CD8-positive, alpha-beta T cell (primary cell): ENCODE measurements at regions of chrX and their contacts with region 1.

Region 1: GRCh38 chrX:148043456-148043855 is 62.3 kb downstream of the FMR1NB start:
- DNase-seq: no peak
- ATAC-seq: no peak
- H3K4me3 ChIP-seq: no peak overlapping the region
- H3K4me3 Mint-ChIP-seq: no peak overlapping the region
- H3K27ac ChIP-seq: no peak overlapping the region
- H3K27ac Mint-ChIP-seq: no peak overlapping the region
- H3K4me1 ChIP-seq: no peaks in the 10 kb centered on the region
- H3K4me1 Mint-ChIP-seq: no peaks in the 10 kb centered on the region
- H3K27me3 ChIP-seq: no peaks in the 10 kb centered on the region
- H3K27me3 Mint-ChIP-seq: no peaks in the 10 kb centered on the region
- CTCF ChIP-seq: no peak

Region 2: DNA sequence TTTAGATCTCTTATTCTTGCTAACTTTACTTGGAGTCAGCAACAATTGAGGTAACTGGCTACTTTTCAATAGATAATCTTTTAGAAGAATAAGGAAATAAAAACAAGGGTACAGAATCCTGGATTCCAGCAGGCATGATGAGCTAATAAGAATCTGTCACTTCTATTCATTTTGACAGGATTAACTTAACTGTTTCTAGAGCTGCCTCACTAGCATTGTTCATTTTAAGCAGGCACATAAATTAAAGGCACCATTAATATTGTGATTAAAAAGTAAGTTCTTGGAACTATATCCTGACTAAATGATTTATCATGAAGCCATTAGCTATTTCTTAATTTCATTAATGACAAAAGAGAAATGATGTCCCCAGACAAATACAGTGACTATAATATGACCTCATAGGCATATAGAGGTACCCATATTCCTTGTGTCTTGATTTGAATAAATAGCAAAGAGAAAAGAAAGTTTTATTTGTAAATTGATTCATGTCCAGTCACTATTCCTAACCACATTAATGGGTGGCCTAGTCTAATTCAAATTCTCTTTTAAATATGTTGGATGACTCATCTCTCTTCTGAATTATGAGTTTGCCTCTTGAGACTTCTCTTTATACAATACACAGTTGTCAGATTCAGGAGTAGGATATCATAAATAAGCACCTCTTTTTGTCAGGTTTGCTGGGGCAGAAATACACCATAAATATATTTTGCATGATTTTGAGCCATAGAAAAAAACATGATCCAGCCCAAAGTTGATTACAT is 1882.8 kb before region 1 on chrX:
- CTCF ChIA-PET with region 1: no interaction called
- POLR2A ChIA-PET with region 1: no interaction called
- intact Hi-C with region 1: no loop called
- DNase-seq: no peak
- ATAC-seq: no peak
- H3K4me3 ChIP-seq: no peak overlapping the region
- H3K4me3 Mint-ChIP-seq: no peak overlapping the region
- H3K27ac ChIP-seq: no peak overlapping the region
- H3K27ac Mint-ChIP-seq: no peak overlapping the region
- H3K4me1 ChIP-seq: no peaks in the 10 kb centered on the region
- H3K4me1 Mint-ChIP-seq: no peaks in the 10 kb centered on the region
- H3K27me3 ChIP-seq: no peaks in the 10 kb centered on the region
- H3K27me3 Mint-ChIP-seq: no peaks in the 10 kb centered on the region
- CTCF ChIP-seq: no peak

Region 3: GRCh38 chrX:148024425-148025148 is 18.9 kb before region 1 on chrX:
- CTCF ChIA-PET with region 1: no interaction called
- POLR2A ChIA-PET with region 1: no interaction called
- intact Hi-C with region 1: no loop called
- DNase-seq: peak in 1 of 9 experiments; percentile 1
- ATAC-seq: no peak
- H3K4me3 ChIP-seq: no peak overlapping the region
- H3K4me3 Mint-ChIP-seq: no peak overlapping the region
- H3K27ac ChIP-seq: no peak overlapping the region
- H3K27ac Mint-ChIP-seq: no peak overlapping the region
- H3K4me1 ChIP-seq: no peaks in the 10 kb centered on the region
- H3K4me1 Mint-ChIP-seq: peaks cover 2% of the 10 kb centered on the region
- H3K27me3 ChIP-seq: no peaks in the 10 kb centered on the region
- H3K27me3 Mint-ChIP-seq: no peaks in the 10 kb centered on the region
- CTCF ChIP-seq: no peak

Region 4: DNA sequence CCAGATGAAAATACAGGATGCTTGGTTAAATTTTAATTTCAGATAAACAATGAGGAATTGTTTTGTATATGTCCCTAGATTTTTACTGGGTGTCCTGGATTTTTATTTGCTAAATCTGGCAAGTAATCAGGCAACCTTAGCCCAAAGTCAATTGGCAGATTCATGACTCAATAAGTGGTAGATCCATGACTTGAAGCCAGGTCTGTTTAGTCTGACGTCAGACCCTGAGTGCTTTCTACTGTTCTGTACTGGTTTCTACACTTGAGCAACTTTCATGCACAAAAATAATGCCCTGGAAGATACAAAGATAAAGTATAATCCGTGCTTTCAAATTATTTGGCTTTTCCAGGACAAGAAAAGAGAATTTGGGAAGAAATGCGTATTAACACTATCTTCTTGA is 12.6 kb after region 1 on chrX:
- CTCF ChIA-PET with region 1: no interaction called
- POLR2A ChIA-PET with region 1: no interaction called
- intact Hi-C with region 1: loop called in 1 of 2 experiments (anchors 2 kb)
- DNase-seq: no peak
- ATAC-seq: no peak
- H3K4me3 ChIP-seq: no peak overlapping the region
- H3K4me3 Mint-ChIP-seq: no peak overlapping the region
- H3K27ac ChIP-seq: no peak overlapping the region
- H3K27ac Mint-ChIP-seq: no peak overlapping the region
- H3K4me1 ChIP-seq: no peaks in the 10 kb centered on the region
- H3K4me1 Mint-ChIP-seq: no peaks in the 10 kb centered on the region
- H3K27me3 ChIP-seq: no peaks in the 10 kb centered on the region
- H3K27me3 Mint-ChIP-seq: peaks cover 7% of the 10 kb centered on the region
- CTCF ChIP-seq: no peak